ENCODE measurements at regions of chr4 and their contacts with region 1.

Region 1: GRCh38 chr4:119628308-119629141 is at the start of gene PDE5A:
- DNase-seq: peak; percentile 87
- ATAC-seq: peak; percentile 75
- H3K4me3 ChIP-seq: peak within 1 kb of the TSS; percentile 98
- H3K27ac ChIP-seq: 0 out of 2 replicates have a peak within 1 kb of the TSS, but pooled peaks have one; percentile 18
- H3K4me1 ChIP-seq: peaks cover 24% of the 10 kb centered on the region
- H3K27me3 ChIP-seq: no peaks in the 10 kb centered on the region
- CTCF ChIP-seq: peak; percentile 69
- total RNA-seq, gene PDE5A: 8.1 and 11.5 TPM in 2 replicates

Region 2: DNA sequence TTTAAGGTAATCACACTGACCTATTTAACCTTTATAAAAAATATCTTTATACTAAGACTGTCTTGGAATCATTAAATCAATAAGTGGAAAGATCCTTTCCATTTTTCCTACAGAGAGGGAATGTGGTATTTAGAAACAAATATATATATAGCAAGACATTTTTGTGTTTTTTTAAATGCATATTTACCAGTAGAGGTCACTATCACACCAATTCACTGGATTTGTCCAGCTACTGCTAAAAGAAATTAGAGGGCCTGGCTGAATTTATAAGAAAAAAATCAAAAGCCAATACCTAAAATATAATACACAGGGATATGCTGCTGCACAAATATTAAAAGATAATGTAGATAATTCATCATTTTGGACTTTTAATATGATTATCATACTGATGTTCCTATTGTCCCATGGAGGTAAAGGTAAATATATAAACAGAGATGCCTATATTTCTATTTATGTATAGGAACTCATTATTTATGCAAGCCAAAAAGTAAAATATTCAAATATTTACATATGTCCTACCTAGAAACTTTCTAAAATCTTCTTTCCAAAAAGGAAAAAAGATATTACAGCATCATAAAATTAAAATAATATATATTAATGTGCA is 69.4 kb before region 1 on chr4:
- CTCF ChIA-PET with region 1: interaction called, 5 read pairs
- POLR2A ChIA-PET with region 1: no interaction called
- intact Hi-C with region 1: loop called (anchors 1 kb)
- DNase-seq: peak; percentile 66
- ATAC-seq: no peak; the same call in 1 of the 2 replicates
- H3K4me3 ChIP-seq: no peak overlapping the region
- H3K27ac ChIP-seq: no peak overlapping the region
- H3K4me1 ChIP-seq: no peaks in the 10 kb centered on the region
- H3K27me3 ChIP-seq: no peaks in the 10 kb centered on the region
- CTCF ChIP-seq: peak; percentile 63

Region 3: DNA sequence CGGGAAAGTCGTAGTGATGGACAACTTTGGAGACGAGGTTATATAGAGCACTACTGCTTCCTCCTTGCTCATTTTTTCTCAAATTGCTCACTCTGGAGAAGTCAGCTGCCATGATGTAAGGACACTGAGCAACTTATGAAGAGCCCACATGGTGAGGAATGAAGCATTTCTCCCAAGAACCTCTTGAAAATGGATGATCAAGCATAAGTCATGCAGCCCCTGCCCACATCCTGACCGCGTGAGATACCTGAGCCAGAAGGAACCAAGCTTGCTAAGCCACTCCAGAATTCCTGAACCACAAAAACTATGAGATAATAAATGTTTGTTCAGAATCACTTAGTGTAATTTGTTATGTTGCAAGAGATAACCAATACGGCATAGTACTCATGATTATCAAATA is 42.8 kb before region 1 on chr4:
- CTCF ChIA-PET with region 1: no interaction called
- POLR2A ChIA-PET with region 1: no interaction called
- intact Hi-C with region 1: no loop called
- DNase-seq: peak; percentile 53
- ATAC-seq: no peak; the same call in 1 of the 2 replicates
- H3K4me3 ChIP-seq: no peak overlapping the region
- H3K27ac ChIP-seq: no peak overlapping the region; the same call in 1 of the 2 replicates
- H3K4me1 ChIP-seq: 0 out of 2 replicates have a peak, but pooled peaks cover 3% of the 10 kb centered on the region
- H3K27me3 ChIP-seq: no peaks in the 10 kb centered on the region
- CTCF ChIP-seq: no peak

Region 4: GRCh38 chr4:119735165-119735651 is 106.7 kb after region 1 on chr4:
- CTCF ChIA-PET with region 1: interaction called, 11 read pairs
- POLR2A ChIA-PET with region 1: interaction called, 3 read pairs
- intact Hi-C with region 1: loop called (anchors 1 kb)
- DNase-seq: peak; percentile 89
- ATAC-seq: peak; percentile 87
- H3K4me3 ChIP-seq: no peak overlapping the region; the same call in 1 of the 2 replicates
- H3K27ac ChIP-seq: peak overlapping the region; percentile 77
- H3K4me1 ChIP-seq: peaks cover 56% of the 10 kb centered on the region
- H3K27me3 ChIP-seq: no peaks in the 10 kb centered on the region
- CTCF ChIP-seq: no peak

Region 5: DNA sequence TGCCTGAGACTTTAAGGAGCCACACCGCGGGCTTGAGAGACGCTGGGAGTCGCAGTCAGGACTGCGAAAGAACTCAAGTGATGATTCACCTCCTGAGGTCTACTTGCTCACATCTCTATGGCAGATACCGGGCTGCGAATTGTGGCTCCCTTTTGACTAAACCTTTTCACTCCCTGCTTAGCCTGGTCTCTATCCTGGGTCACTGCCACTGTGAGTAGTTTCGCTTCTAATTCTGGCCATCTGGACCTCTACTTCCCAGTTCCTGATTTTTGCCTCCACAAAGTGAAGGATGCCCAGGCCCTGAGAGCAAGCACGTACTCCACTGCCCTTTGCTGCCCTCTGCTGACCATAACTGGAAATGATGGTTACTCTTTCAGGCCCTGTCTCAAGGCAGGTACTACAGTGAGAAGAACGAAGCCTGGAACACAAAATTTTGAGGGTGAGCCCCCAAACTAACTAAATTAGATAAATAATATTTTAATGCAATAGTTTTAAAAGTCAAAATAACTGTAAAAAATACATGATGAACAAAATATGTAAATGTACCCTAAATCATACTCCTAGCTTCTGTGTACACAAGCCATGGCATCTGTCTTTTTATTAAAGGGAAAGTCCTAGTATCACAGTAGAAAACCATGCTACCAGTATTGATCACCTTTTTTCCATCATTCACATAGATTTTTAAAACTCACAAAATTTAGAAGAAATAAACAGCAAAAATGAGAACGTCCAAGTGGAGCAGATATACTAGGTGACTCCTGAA is 421.4 kb after region 1 on chr4:
- CTCF ChIA-PET with region 1: interaction called, 3 read pairs
- POLR2A ChIA-PET with region 1: interaction called, 3 read pairs
- intact Hi-C with region 1: loop called (anchors 2 kb)
- DNase-seq: peak; percentile 80
- ATAC-seq: peak; percentile 98
- H3K4me3 ChIP-seq: peak overlapping the region; percentile 23; the same call in 1 of the 2 replicates
- H3K27ac ChIP-seq: no peak overlapping the region
- H3K4me1 ChIP-seq: no peaks in the 10 kb centered on the region
- H3K27me3 ChIP-seq: no peaks in the 10 kb centered on the region
- CTCF ChIP-seq: peak; percentile 78

Measured in PC-3 (cell line).